A673 (cell line): ENCODE measurements at regions of chr18 and their contacts with region 1.

Region 1: DNA sequence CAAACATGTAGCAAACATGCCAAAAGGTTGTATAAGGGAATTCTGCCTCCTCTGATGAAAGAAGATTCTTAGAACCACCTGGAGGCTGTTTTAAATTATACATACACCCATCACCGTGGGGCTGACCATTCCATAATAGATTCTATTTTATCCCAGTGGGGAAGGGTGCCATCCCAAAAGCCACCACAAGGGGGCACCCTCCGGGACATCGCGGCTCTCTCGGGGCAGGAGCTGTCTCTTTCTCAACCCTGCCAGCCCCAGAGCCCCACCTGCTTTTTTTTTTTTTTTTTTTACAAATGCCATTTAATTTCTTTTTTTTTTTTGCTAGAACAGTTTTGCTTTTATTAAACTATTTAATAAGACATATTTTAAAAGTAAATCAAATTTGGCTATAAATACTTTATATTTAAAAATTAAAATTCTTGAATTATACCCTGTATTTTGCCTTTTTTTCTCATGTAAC is 8.6 kb upstream of the MTCL1 start:
- DNase-seq: peak; percentile 71
- H3K4me3 ChIP-seq: no peak overlapping the region
- H3K27ac ChIP-seq: no peak overlapping the region
- H3K4me1 ChIP-seq: no peaks in the 10 kb centered on the region
- H3K27me3 ChIP-seq: no peaks in the 10 kb centered on the region
- CTCF ChIP-seq: peak; percentile 92

Region 2: DNA sequence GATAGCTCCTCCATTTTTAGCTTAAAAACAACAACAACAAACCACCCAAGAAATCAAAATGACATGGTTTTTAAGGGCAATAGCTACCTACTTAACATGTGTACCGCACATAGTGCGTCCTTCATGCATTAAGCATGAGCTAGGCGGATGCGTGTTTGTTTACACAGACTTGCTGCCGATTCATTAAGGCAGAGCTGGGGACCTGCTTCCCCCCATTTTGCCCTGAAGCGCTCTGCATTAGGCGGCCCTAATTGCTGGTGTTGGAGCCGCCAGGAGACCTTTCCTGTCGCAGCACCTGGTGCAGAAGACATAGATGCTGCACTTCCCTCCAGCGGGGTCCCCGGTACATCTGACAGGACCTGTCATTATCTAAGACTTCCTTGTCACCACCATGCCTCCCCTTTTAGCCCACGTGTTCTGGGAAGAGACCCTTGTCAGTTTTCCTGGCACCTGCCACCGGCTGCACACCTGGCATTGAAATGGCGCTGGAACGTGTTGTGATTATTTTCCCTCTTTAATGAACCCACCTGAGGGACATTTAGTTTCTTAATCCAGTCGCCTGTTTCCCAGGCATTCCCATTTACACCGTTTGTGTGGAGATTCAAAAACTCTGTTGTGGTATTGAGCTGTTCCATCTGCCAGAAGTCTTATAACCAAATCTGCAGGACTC is 348.6 kb before region 1 on chr18:
- CTCF ChIA-PET with region 1: no interaction called
- POLR2A ChIA-PET with region 1: no interaction called
- intact Hi-C with region 1: no loop called
- DNase-seq: no peak
- H3K4me3 ChIP-seq: no peak overlapping the region
- H3K27ac ChIP-seq: no peak overlapping the region
- H3K4me1 ChIP-seq: no peaks in the 10 kb centered on the region
- H3K27me3 ChIP-seq: peaks cover 30% of the 10 kb centered on the region
- CTCF ChIP-seq: no peak

Region 3: DNA sequence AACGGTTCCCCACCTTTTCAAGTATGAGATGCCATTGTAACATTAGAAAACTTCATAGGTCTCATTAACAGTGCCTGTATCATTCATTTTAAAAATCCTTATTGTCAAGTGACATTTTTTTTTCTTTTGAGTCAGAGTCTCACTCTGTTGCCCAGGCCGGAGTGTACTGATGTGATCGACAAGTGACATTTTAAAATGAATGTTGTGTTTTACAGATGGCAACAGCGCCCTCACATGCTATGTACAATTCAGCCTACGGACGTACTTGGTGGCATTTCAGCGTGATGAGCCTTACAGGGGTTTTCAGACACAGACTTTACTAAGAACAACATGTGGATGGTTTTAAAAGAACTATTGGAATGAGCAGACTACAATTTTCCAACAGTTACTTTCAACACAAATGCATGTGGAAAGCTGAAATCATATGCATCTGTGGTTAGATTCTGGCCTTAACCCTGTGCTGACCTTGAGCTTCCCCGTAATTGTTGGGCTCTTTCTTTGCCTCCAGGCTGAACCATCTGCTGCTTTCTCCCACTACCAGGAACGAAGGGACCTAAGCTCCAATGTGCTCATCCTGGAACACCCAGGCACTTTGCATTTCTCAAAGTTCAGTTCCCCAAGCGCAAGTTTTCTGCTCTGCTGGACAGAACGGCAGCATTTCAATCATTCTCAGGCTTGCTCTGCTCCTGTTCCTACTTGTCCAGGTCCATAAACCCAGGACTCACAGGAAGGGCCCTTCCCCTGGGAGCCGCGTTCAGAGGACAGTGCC is 285.8 kb after region 1 on chr18:
- CTCF ChIA-PET with region 1: interaction called, 31 read pairs
- POLR2A ChIA-PET with region 1: no interaction called
- intact Hi-C with region 1: no loop called
- DNase-seq: peak; percentile 80
- H3K4me3 ChIP-seq: no peak overlapping the region
- H3K27ac ChIP-seq: no peak overlapping the region
- H3K4me1 ChIP-seq: no peaks in the 10 kb centered on the region
- H3K27me3 ChIP-seq: no peaks in the 10 kb centered on the region
- CTCF ChIP-seq: peak; percentile 73

Region 4: DNA sequence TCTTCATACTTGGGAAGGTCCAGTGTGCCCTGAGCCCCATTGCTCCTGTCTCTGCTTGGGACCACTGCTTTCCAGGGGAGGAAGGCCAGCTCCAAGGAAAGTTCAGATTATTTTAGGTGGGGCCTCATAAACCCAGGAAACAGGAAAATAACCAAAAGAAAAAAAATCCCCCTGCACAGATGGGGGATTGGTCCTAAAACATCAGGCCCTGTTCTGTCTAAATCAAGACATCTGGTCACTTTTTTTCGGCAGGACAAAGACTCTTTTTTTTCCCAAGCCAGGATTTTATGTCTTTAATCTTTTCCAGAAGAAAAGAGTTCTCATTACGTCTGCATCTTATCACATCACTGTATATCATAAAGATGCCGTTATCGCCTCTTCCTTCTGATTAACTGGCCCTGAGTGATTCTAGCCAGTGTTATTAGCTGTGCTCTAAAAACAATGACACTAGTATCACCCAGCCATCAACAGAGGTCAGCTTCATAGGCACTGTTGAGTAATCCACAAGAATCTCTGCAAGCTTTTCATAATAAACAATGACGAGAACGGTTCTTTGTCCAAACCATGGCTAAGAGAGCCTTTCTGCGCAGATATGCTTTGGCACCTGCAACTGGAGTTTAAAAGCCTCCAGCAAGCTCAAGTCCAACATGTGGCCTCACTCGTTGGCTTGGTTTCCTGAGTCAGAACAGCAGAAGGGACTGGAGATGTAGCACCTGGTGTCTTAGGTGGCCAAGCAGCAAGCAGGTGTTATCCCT is 1355.3 kb after region 1 on chr18:
- CTCF ChIA-PET with region 1: no interaction called
- POLR2A ChIA-PET with region 1: no interaction called
- intact Hi-C with region 1: no loop called
- DNase-seq: no peak
- H3K4me3 ChIP-seq: no peak overlapping the region
- H3K27ac ChIP-seq: no peak overlapping the region
- H3K4me1 ChIP-seq: peaks cover 2% of the 10 kb centered on the region
- H3K27me3 ChIP-seq: no peaks in the 10 kb centered on the region
- CTCF ChIP-seq: no peak